BJ (cell line): ENCODE measurements at regions of chr4 and their contacts with region 1.

Region 1: DNA sequence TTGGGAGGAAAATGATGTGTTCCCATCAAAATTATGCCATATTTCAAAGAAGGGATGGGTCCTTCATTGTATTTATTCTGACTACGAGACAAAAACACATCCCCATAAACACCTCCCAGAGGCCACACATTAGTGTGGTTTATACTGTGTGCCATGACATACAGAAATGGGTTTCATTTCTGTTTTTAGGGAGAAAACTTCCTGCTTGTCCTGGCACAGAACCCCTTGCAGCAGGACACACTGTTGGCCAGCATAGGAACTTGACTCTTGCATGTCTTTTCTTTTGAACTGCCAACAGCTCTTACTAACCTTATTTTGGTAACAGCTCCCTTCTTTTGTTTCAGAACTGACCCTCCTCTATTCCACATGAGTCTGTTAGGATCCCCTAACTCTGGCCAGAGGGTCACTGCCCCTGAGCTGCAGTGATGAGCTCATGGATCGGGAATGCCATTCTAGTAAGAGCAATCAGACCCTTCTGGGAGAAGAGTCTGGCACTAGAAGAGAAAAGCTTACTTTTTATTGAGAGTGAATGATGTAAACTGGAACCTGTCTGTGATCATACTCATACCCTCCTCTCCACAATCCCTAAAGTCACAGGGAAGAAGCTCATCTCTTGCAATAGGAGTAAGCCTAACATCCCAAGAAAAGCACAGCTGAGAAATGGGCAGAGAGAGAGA is 86.4 kb downstream of the SMIM20 start:
- DNase-seq: no peak
- H3K4me3 ChIP-seq: no peak overlapping the region
- H3K27me3 ChIP-seq: no peaks in the 10 kb centered on the region; the same call in 1 of the 2 replicates
- CTCF ChIP-seq: no peak

Region 2: DNA sequence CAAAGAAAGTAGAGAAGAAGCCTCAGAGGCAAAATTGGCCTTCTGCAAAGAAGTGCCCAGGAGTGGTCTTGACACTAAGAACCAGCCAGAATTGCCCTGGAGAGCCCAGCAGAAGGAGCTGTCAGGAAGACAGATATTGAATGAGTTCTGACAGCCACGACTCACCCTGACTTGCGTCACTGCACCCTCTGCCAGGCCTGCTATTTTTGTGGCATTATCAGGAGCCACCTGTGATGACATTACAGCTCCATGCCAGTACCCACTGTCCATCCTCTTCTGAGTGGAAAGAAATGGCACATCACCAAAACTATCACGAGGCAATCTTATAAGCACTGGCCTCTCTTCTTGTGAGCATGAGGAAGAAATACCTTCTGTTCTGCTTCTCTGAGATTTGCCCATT is 18.7 kb before region 1 on chr4:
- CTCF ChIA-PET with region 1: no interaction called
- POLR2A ChIA-PET with region 1: no interaction called
- DNase-seq: no peak
- H3K4me3 ChIP-seq: no peak overlapping the region
- H3K27me3 ChIP-seq: peaks cover 5% of the 10 kb centered on the region; the same call in 1 of the 2 replicates
- CTCF ChIP-seq: no peak

Region 3: DNA sequence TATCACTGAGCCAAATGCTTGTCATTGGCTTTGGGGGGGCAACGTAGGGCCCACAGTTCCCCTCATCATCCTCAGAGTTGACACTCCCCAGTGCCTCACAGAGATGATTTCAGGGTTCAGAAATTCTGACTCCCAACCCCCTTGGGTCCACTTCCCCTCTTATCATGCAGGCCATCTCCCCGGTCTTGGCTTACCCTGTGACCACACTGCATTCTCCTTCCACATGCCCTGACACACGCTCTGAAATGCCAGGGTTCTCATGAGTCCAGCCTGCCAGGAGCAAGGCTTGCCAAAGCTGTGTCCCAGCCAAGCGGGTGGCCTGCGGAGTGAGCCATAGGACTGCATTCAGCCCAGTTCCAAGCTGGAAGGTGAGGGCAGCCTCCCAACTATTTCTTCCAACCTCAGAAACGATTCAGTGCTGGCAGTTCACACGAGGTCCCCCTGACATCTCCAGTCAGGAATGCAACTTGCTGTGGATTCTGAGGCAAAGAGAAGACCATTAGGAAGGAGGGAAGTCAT is 14.8 kb after region 1 on chr4:
- CTCF ChIA-PET with region 1: interaction called, 13 read pairs
- POLR2A ChIA-PET with region 1: no interaction called
- DNase-seq: peak; percentile 98
- H3K4me3 ChIP-seq: no peak overlapping the region
- H3K27me3 ChIP-seq: peaks cover 3% of the 10 kb centered on the region; the same call in 1 of the 2 replicates
- CTCF ChIP-seq: peak; percentile 7; the same call in 1 of the 2 replicates

Region 4: GRCh38 chr4:26388671-26389070 is 388.3 kb after region 1 on chr4:
- CTCF ChIA-PET with region 1: no interaction called
- POLR2A ChIA-PET with region 1: no interaction called
- DNase-seq: no peak
- H3K4me3 ChIP-seq: no peak overlapping the region
- H3K27me3 ChIP-seq: no peaks in the 10 kb centered on the region
- CTCF ChIP-seq: no peak

Region 5: DNA sequence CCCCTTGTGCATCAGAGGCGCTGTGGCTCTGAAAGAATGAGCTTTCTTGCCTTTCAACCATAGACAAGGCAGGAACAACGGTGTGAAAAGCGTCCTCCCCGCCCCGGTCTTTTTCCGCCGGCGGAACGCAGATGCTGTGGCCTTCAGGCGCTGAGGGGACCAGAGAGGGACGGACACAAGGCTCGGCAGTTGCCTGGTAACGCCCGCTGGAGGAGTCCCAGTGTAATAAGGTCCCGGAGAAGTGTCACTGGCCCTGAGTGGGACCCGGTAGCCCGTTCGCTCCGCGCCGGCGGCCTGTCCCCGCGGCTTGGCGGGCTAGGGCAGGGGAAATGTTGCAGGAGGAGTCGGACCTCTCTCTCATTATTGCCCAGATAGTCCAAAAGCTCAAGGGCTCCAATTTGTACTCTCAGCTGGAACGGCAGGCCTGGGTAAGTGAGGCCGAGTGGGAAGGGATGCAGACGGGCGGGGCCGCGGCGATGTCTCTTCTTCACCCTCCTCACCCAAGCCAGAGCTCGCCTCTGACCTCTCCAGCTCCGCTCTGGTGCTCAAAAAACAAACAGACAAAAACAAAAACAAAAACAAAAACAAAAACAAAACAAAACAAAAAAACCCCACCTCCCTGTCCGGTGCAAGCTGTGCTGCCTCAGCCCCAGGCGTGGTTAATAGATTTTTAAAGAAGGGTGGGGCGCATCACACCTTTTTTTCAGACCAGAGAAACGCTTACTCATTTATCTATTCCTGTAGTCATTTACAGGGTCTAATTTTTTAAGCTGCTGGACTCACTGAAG is 583.6 kb after region 1 on chr4 and contains the start of gene TBC1D19:
- CTCF ChIA-PET with region 1: no interaction called
- POLR2A ChIA-PET with region 1: no interaction called
- DNase-seq: no peak
- H3K4me3 ChIP-seq: peak within 1 kb of the TSS; percentile 70
- H3K27me3 ChIP-seq: no peaks in the 10 kb centered on the region
- CTCF ChIP-seq: no peak
- polyA plus RNA-seq, gene TBC1D19: 8.3 and 20.4 TPM in 2 replicates